ENCODE measurements at regions of chr4 and their contacts with region 1.

Region 1: DNA sequence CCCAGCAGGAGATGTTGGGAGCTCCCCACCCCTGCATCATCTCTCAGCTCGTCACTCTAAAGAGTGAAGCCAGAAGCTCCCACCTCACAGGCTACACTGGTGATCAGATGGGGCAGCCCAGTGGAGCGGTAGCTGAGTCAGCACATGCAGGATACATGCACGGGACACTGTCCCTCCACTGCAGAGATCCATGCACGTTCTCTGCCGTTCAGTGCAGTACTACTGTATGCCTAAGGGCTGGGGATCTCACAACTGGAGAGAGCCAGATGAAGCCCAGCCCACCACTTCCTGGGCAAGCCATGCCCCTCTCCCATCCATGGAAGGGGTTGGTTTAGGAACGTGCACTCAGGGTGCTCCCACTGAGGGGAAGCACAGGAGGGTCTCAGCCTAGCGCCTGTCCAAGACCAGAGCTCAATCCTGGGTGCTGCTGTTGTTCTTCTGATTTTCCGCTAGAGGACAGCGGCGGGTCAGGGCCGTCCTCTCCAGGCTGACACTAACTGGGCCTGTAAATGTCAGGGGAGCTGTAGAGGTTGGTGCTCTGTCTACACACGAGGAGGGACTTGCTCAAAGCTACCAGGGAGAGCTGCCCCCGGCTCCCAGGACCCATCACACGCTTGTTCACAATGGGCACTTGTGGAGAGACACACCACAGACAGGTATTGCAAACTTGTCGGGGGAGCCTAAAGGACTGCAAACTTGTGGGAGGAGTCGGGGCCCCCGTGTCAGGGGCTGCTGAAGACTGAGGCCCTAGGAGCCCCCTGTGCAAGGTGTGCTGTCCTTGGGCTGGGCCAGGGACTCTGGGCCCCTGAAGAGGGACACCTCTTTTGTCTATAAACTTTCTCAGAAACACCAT is 18.2 kb upstream of the ABLIM2 start:
- H3K4me3 Mint-ChIP-seq: no peak overlapping the region
- H3K27ac Mint-ChIP-seq: no peak overlapping the region
- H3K4me1 Mint-ChIP-seq: peaks cover 18% of the 10 kb centered on the region
- H3K27me3 Mint-ChIP-seq: peaks cover 19% of the 10 kb centered on the region

Region 2: GRCh38 chr4:8191136-8191747 is 14.5 kb after region 1 on chr4:
- intact Hi-C with region 1: loop called (anchors 2 kb)
- H3K4me3 Mint-ChIP-seq: peak overlapping the region; percentile 65
- H3K27ac Mint-ChIP-seq: peak overlapping the region; percentile 98
- H3K4me1 Mint-ChIP-seq: peaks cover 71% of the 10 kb centered on the region
- H3K27me3 Mint-ChIP-seq: peaks cover 38% of the 10 kb centered on the region

Region 3: GRCh38 chr4:8241895-8242696 is 65.3 kb after region 1 on chr4:
- intact Hi-C with region 1: loop called (anchors 5 kb)
- H3K4me3 Mint-ChIP-seq: no peak overlapping the region
- H3K27ac Mint-ChIP-seq: no peak overlapping the region
- H3K4me1 Mint-ChIP-seq: peaks cover 55% of the 10 kb centered on the region
- H3K27me3 Mint-ChIP-seq: peaks cover 2% of the 10 kb centered on the region

Region 4: DNA sequence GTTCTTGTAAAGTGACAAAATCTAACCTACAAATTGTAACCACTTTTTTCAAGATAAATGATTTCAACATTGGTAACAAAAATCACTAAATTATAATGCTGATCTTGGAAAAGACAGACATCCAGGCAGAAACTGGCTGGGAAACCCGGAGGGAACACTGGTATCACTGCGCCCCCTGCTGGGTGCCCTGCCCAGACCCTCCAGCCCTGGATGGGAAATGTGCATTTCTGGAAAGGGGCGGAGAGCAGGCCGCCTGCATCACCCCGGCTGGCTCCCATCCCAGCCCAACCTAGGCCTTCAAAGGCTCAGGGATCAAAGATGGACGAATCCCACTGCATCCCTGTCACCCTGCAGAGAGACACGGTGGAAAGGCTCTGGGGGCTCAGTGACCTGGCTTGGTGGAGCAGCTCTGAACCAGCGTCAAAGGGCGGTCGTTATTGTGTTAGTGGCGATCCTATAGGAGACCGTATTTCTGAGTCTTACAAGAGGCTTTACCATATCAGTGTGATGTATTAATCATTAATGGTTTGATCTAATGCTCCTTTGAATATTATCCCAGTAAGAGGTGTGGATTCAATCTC is 226.5 kb after region 1 on chr4:
- intact Hi-C with region 1: loop called (anchors 2 kb)
- H3K4me3 Mint-ChIP-seq: no peak overlapping the region
- H3K27ac Mint-ChIP-seq: no peak overlapping the region
- H3K4me1 Mint-ChIP-seq: peaks cover 21% of the 10 kb centered on the region
- H3K27me3 Mint-ChIP-seq: no peaks in the 10 kb centered on the region